ENCODE measurements at regions of chr3 and their contacts with region 1.

Region 1: GRCh38 chr3:14672588-14672987 is 2.4 kb upstream of the C3orf20 start:
- DNase-seq: no peak
- ATAC-seq: no peak
- H3K4me3 ChIP-seq: no peak overlapping the region
- H3K27ac ChIP-seq: no peak overlapping the region
- H3K4me1 ChIP-seq: no peaks in the 10 kb centered on the region
- H3K27me3 ChIP-seq: no peaks in the 10 kb centered on the region
- CTCF ChIP-seq: no peak

Region 2: GRCh38 chr3:14775011-14775410 is 102.4 kb after region 1 on chr3:
- intact Hi-C with region 1: loop called in 9 of 10 experiments (anchors 2 to 5 kb)
- DNase-seq: no peak
- ATAC-seq: no peak
- H3K4me3 ChIP-seq: no peak overlapping the region
- H3K27ac ChIP-seq: no peak overlapping the region
- H3K4me1 ChIP-seq: no peaks in the 10 kb centered on the region
- H3K27me3 ChIP-seq: no peaks in the 10 kb centered on the region
- CTCF ChIP-seq: no peak

Region 3: DNA sequence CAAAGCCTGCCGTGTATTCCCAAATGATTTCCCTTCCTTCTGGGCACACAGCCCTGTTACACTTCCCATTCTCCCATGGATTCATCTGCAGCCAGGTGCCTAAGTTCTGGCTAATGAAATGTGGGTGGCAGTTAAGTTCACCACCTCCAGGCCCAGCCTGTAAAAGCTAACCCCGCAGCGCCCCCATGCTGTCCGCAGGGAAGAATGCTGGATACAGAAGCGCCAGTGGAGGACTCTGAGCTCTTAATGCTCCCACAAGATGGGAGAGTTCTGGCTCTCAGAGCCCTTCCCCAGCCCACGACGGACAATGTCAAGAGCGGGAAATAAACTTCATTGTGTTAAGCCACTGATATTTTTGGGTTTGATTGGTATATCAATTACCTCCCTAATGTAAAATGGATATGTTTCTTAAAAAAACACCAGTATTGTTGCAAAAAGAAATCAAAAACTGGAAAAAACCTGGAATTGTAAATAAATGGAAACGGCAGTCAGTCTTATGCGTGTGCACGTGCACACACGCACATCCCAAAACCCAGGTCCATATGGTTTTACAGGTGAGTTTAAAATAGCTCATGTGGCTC is 108.4 kb after region 1 on chr3:
- intact Hi-C with region 1: loop called (anchors 2 to 5 kb)
- DNase-seq: peak; percentile 46 to 61
- ATAC-seq: peak; percentile 65 to 93 (median 88)
- H3K4me3 ChIP-seq: no peak overlapping the region
- H3K27ac ChIP-seq: no peak overlapping the region
- H3K4me1 ChIP-seq: peaks cover 0 to 18% (median 0%) of the 10 kb centered on the region in 9 donors
- H3K27me3 ChIP-seq: peaks cover 0 to 13% (median 0%) of the 10 kb centered on the region in 7 donors
- CTCF ChIP-seq: peak; percentile 39 to 82 (median 70)

Region 4: GRCh38 chr3:14921078-14921616 is 248.6 kb after region 1 on chr3:
- intact Hi-C with region 1: loop called (anchors 1 to 5 kb)
- DNase-seq: peak; percentile 89 to 90
- ATAC-seq: peak; percentile 88 to 95 (median 92)
- H3K4me3 ChIP-seq: no peak overlapping the region
- H3K27ac ChIP-seq: peak overlapping the region in 1 of 10 donors; percentile 15
- H3K4me1 ChIP-seq: peaks cover 0 to 14% (median 10%) of the 10 kb centered on the region in 9 donors
- H3K27me3 ChIP-seq: peaks cover 0 to 4% (median 0%) of the 10 kb centered on the region in 7 donors
- CTCF ChIP-seq: peak; percentile 94 to 99 (median 98)